PC-9 (cell line): ENCODE measurements at regions of chr7 and their contacts with region 1.

Region 1: GRCh38 chr7:139731802-139732470 is 45.9 kb downstream of the HIPK2 start:
- DNase-seq: peak; percentile 89 to 92
- H3K4me3 ChIP-seq: peak overlapping the region; percentile 36; the same call in 1 of the 2 replicates
- H3K27ac ChIP-seq: peak overlapping the region; percentile 45
- H3K4me1 ChIP-seq: peaks cover 22% of the 10 kb centered on the region
- H3K27me3 ChIP-seq: no peaks in the 10 kb centered on the region
- CTCF ChIP-seq: no peak

Region 2: GRCh38 chr7:139771001-139771970 is 39.4 kb after region 1 on chr7:
- CTCF ChIA-PET with region 1: no interaction called
- POLR2A ChIA-PET with region 1: no interaction called
- intact Hi-C with region 1: loop called (anchors 2 kb)
- DNase-seq: peak; percentile 43 to 95
- H3K4me3 ChIP-seq: peak overlapping the region; percentile 41; the same call in 1 of the 2 replicates
- H3K27ac ChIP-seq: peak overlapping the region; percentile 90
- H3K4me1 ChIP-seq: peaks cover 68% of the 10 kb centered on the region
- H3K27me3 ChIP-seq: no peaks in the 10 kb centered on the region
- CTCF ChIP-seq: no peak

Region 3: DNA sequence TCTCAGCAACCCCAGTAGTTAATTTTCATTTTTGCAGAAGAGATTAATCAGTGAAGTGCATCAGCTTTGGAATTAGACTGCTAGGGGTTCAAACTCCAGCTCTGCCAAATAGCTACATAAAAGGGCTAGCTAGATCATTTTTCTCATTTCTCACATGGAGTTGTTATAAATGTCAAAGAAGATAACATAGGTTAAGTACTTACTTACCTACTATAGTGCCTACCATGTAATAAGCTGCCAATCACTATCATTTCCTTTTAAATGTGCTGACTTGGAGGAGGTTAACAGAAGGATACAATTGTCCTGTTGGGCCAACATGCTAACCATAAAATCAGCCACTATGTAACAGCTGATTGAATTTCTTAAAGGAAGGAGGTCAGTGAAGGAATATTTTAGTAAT is 404.1 kb after region 1 on chr7:
- CTCF ChIA-PET with region 1: no interaction called
- POLR2A ChIA-PET with region 1: no interaction called
- intact Hi-C with region 1: no loop called
- DNase-seq: no peak
- H3K4me3 ChIP-seq: no peak overlapping the region
- H3K27ac ChIP-seq: no peak overlapping the region
- H3K4me1 ChIP-seq: no peaks in the 10 kb centered on the region
- H3K27me3 ChIP-seq: no peaks in the 10 kb centered on the region
- CTCF ChIP-seq: no peak